GM13976 (cell line): ENCODE measurements at regions of chr19 and their contacts with region 1.

Region 1: GRCh38 chr19:35931161-35931873 is 4.9 kb upstream of the LRFN3 start:
- DNase-seq: peak; percentile 99
- CTCF ChIP-seq: peak; percentile 99

Region 2: GRCh38 chr19:34393629-34394028 is 1537.7 kb before region 1 on chr19:
- in situ Hi-C with region 1: no loop called
- DNase-seq: peak; percentile 13
- CTCF ChIP-seq: no peak

Region 3: GRCh38 chr19:35702223-35703012 is 228.9 kb before region 1 on chr19:
- in situ Hi-C with region 1: loop called (anchors 10 kb)
- DNase-seq: peak; percentile 95
- CTCF ChIP-seq: no peak

Region 4: GRCh38 chr19:35775298-35776110 is 155.8 kb before region 1 on chr19 and contains the start of gene ARHGAP33:
- in situ Hi-C with region 1: no loop called
- DNase-seq: peak; percentile 100
- CTCF ChIP-seq: no peak

Region 5: GRCh38 chr19:35879770-35880317 is 51.5 kb before region 1 on chr19:
- in situ Hi-C with region 1: loop called (anchors 10 kb)
- DNase-seq: peak; percentile 87
- CTCF ChIP-seq: no peak